ENCODE measurements at regions of chr6 and their contacts with region 1.

Region 1: GRCh38 chr6:7180751-7181150 is 73.0 kb downstream of the RREB1 start:
- DNase-seq: no peak
- H3K4me3 ChIP-seq: no peak overlapping the region
- H3K27ac ChIP-seq: no peak overlapping the region
- H3K4me1 ChIP-seq: peaks cover 0 to 9% (median 5%) of the 10 kb centered on the region in 4 experiments; a peak in 5 of 7 replicates
- H3K27me3 ChIP-seq: no peaks in the 10 kb centered on the region
- CTCF ChIP-seq: no peak
- EP300 ChIP-seq: no peak
- POLR2A ChIP-seq: no peak
- RAD21 ChIP-seq: no peak

Region 2: DNA sequence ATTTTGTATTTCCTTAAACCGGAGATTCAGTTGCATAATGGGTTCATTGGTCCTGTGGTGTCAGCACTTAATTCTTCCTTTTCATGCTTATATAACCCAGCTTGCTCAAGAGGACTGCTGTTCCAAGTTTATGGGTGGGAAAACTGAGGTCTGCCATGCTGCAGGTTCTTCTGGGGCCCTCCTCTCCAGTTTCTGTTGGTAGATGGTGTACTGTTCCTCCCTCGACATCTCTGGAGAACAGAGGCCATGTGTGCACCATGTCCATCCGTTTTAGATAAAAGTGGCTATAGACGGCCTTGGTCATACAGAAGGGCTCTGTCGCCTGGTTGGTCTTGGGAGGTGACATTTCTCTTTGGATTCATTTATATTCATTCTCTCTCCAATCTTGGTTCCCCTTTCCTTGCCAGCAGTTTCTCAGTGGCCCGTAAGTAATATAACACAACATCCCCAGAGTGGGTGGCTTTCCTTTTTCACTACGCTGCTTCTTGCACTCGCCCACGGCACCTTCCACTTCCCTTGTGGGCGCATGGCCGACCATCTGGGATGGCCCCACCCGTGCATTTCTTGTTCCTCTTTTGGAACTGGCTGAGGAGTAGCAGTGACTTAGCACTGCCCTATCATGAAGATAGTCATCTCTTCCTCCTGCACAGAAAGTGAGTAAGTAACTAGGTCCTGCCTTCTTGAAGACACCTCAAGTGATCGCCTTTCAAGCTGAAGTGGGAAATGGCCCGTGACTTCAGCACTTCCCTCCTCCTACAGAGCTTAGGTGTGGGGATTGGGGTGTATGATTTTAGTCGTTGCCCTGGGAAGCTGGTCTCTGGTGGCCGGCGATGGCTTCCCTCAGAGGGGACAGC is 21.2 kb after region 1 on chr6:
- CTCF ChIA-PET with region 1: interaction called, 10 read pairs
- POLR2A ChIA-PET with region 1: no interaction called
- DNase-seq: no peak
- H3K4me3 ChIP-seq: no peak overlapping the region
- H3K27ac ChIP-seq: no peak overlapping the region
- H3K4me1 ChIP-seq: no peaks in the 10 kb centered on the region; a peak in 1 of 7 replicates
- H3K27me3 ChIP-seq: no peaks in the 10 kb centered on the region
- CTCF ChIP-seq: no peak
- EP300 ChIP-seq: no peak
- POLR2A ChIP-seq: no peak
- RAD21 ChIP-seq: no peak